ENCODE measurements at regions of chr10 and their contacts with region 1.

Region 1: DNA sequence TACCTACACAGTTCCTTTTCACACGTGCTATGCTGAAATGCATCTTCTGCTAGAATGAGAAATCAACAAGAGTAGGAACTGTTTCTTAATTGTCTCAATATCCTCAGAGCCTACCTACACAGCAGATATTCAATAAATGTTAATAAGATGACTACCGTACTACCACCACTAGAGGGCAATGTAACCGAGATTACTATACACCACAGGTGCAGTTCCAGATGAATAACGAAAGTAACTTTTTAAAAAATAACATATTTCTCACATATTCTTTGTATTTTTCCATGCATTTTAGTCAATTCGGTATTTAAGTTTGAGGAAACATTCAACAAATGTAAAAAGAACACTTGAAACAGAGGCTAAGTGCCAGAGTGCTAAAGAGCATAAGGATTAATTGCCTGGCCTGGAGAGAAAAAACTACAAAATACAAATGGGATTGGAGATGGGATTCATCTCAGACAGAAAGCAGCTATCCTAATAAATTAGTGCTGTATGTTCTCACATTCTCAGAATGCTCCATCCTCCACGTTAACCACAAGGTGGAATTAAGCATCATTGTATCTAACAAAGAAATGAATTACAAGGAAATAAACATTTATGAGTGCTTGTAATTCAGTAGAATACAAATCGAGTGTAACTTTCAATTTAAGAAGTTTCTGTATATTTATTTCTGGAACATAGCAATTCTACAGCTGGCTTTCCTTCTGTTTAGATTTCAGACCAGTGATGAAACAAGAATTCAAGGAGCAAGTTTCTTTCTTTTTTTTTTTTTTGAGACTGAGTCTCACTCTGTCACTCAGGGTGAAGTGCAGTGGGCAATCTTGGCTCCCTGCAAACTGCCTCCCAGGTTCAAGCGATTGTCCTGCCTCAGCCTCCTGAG is 20.3 kb upstream of the HECTD2 start:
- DNase-seq: peak; percentile 78
- H3K4me3 Mint-ChIP-seq: no peak overlapping the region
- H3K27ac Mint-ChIP-seq: peak overlapping the region; percentile 18
- H3K4me1 Mint-ChIP-seq: peaks cover 6% of the 10 kb centered on the region
- H3K27me3 Mint-ChIP-seq: peaks cover 20% of the 10 kb centered on the region

Region 2: DNA sequence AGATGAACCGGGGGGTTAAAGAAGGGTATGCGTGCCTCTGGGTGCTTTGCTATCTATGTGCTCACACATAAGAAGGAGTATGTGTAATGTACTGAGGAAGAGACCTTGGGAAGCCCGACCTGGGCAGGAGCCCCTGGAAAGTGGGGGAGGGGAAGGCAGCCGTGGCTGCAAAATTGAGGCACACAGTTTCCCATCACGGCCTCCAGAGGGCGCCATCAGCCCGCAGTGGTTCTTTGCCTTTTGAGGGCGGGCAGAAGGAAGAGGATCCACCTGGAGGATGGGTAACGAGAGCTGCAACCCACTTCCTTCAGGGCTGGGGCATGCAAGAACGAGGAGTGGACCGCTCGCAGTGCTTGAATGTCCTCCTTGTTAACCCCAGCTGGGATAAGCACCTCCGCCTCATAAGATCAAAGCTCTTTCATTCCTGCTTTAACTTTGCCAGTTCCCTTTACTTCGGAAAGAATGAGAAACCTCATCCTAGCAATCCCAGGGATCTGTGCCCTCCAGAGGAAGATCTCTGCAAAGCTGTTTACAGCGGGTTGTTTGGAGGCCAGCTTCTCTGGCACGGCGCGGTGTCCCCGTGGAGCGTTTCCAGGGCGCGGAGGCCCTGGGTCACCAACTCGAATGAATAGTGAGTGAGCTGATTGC is 91.5 kb before region 1 on chr10:
- intact Hi-C with region 1: loop called (anchors 5 kb)
- DNase-seq: peak; percentile 93
- H3K4me3 Mint-ChIP-seq: peak overlapping the region; percentile 71
- H3K27ac Mint-ChIP-seq: no peak overlapping the region
- H3K4me1 Mint-ChIP-seq: peaks cover 8% of the 10 kb centered on the region
- H3K27me3 Mint-ChIP-seq: peaks cover 22% of the 10 kb centered on the region

Region 3: DNA sequence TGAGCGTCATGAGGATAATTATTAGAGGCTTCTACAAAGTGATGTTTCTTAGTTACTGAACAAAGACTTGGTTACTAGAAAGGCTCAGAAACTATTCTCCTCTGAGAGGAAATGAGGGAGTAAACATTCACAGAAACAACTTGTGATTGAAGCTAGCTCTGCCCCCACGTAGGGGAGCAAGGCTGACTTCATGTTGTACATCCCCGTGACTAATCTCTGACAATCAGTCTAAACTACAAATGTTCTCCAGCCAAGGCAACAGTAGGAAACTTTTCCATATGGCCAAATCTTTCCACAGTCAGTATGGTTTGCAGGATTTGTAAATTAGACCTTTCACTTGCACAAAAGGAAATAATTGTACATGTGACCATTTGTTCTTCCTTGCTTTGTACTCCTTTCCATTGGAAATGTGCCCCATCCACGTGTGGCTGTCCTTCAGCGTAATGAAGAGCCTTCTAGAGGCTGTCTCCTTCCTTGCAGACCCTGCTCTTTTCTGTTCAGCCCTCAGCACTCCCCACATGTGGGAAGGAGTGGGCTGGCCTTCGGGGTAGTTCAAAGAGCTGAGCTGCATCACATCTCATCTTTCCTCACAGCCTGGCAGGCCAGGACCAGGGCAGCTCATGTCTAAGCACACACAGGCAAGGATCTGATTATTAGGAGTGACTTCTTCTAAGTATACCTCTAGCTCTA is 75.9 kb before region 1 on chr10:
- intact Hi-C with region 1: no loop called
- DNase-seq: no peak
- H3K4me3 Mint-ChIP-seq: peak overlapping the region; percentile 28
- H3K27ac Mint-ChIP-seq: peak overlapping the region; percentile 81
- H3K4me1 Mint-ChIP-seq: peaks cover 3% of the 10 kb centered on the region
- H3K27me3 Mint-ChIP-seq: peaks cover 8% of the 10 kb centered on the region

Region 4: GRCh38 chr10:91551856-91552255 is 162.0 kb after region 1 on chr10:
- intact Hi-C with region 1: loop called (anchors 2 kb)
- DNase-seq: no peak
- H3K4me3 Mint-ChIP-seq: no peak overlapping the region
- H3K27ac Mint-ChIP-seq: no peak overlapping the region
- H3K4me1 Mint-ChIP-seq: no peaks in the 10 kb centered on the region
- H3K27me3 Mint-ChIP-seq: peaks cover 2% of the 10 kb centered on the region

Region 5: DNA sequence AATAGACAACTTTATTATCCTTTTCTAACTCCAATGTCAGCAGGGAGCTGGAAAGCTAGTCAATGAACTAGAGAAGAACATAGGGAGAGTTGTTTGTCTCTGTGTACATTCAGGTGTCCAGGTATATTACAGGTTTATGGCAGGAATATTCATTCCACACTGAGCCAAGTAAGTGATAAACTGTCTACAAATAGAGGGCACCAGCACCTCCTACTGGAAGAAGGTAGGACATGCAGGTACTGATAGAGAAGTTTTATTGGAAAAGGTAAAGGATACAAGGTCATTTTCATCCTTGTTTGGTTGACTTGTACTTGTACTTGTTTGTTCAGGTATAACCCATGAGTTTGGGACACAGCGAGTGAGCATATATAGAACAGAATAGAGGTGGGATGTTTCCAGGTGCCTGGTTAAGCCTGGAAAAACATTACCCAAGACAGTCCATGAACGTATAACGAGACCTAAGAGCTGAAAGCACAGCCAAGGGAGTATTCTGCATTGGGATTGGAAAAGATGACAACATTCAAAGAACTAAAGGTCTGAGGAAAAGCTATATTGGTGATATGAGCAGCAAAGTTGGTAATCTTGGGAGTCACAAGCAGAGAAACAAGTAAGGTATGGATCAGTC is 304.4 kb after region 1 on chr10:
- intact Hi-C with region 1: loop called (anchors 2 kb)
- DNase-seq: peak; percentile 70
- H3K4me3 Mint-ChIP-seq: no peak overlapping the region
- H3K27ac Mint-ChIP-seq: no peak overlapping the region
- H3K4me1 Mint-ChIP-seq: peaks cover 5% of the 10 kb centered on the region
- H3K27me3 Mint-ChIP-seq: peaks cover 3% of the 10 kb centered on the region